PC-3 (cell line): ENCODE measurements at regions of chr2 and their contacts with region 1.

Region 1: GRCh38 chr2:56009758-56010458 is 86.3 kb upstream of the EFEMP1 start:
- DNase-seq: peak; percentile 72
- ATAC-seq: no peak
- H3K4me3 ChIP-seq: no peak overlapping the region
- H3K27ac ChIP-seq: no peak overlapping the region
- H3K4me1 ChIP-seq: peaks cover 10% of the 10 kb centered on the region; the same call in 1 of the 2 replicates
- H3K27me3 ChIP-seq: no peaks in the 10 kb centered on the region
- CTCF ChIP-seq: peak; percentile 73

Region 2: GRCh38 chr2:55707751-55708150 is 302.2 kb before region 1 on chr2:
- CTCF ChIA-PET with region 1: no interaction called
- POLR2A ChIA-PET with region 1: no interaction called
- intact Hi-C with region 1: no loop called
- DNase-seq: no peak
- ATAC-seq: no peak
- H3K4me3 ChIP-seq: no peak overlapping the region
- H3K27ac ChIP-seq: no peak overlapping the region
- H3K4me1 ChIP-seq: no peaks in the 10 kb centered on the region
- H3K27me3 ChIP-seq: no peaks in the 10 kb centered on the region
- CTCF ChIP-seq: no peak

Region 3: DNA sequence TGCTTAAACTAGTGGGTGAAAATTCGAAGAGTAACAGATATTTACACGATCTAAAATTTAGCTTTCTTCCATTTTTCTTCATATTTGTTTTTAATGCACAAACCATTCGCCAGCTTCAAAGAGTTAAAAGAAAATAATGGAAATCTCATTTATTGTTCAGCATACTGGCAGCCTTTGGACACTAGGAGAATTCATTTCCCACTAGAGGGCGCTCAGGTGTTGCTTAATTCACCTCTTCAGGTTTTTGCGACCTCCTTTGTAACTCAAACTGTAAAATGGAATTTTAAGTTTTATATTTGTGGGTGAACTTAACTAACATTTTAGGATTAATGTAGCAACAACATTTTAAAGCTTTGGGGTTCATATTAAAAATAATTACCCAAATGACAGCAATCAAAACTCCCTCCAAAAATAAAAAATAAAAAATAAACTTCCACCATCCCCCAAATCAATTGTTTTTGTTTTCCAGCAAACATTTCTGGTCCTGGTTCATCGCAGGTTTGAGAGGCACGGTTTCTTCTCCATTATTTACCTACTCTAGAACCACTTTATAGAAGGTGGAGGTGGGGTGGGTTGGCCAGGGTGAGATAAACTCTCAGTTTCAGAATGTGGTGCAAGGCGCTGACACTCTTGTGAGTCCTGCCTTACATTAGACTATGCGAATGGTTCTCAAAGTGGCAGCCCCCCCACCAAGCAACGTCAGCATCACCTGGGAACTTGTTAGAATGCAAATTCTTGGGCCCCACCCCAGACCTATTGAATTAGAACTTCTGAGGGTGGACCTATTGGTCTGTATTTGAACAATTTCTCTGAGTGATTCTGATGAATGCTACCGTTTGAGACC is 291.5 kb before region 1 on chr2:
- CTCF ChIA-PET with region 1: no interaction called
- POLR2A ChIA-PET with region 1: no interaction called
- intact Hi-C with region 1: loop called (anchors 1 kb)
- DNase-seq: peak; percentile 86
- ATAC-seq: peak; percentile 74
- H3K4me3 ChIP-seq: no peak overlapping the region
- H3K27ac ChIP-seq: no peak overlapping the region
- H3K4me1 ChIP-seq: peaks cover 22% of the 10 kb centered on the region
- H3K27me3 ChIP-seq: no peaks in the 10 kb centered on the region
- CTCF ChIP-seq: peak; percentile 93

Region 4: GRCh38 chr2:55776966-55777365 is 232.9 kb before region 1 on chr2:
- CTCF ChIA-PET with region 1: no interaction called
- POLR2A ChIA-PET with region 1: no interaction called
- intact Hi-C with region 1: no loop called
- DNase-seq: no peak
- ATAC-seq: no peak
- H3K4me3 ChIP-seq: no peak overlapping the region
- H3K27ac ChIP-seq: no peak overlapping the region
- H3K4me1 ChIP-seq: peaks cover 35% of the 10 kb centered on the region
- H3K27me3 ChIP-seq: no peaks in the 10 kb centered on the region
- CTCF ChIP-seq: no peak

Region 5: GRCh38 chr2:55970500-55970899 is 39.4 kb before region 1 on chr2:
- CTCF ChIA-PET with region 1: no interaction called
- POLR2A ChIA-PET with region 1: no interaction called
- intact Hi-C with region 1: no loop called
- DNase-seq: no peak
- ATAC-seq: no peak
- H3K4me3 ChIP-seq: no peak overlapping the region
- H3K27ac ChIP-seq: no peak overlapping the region
- H3K4me1 ChIP-seq: no peaks in the 10 kb centered on the region
- H3K27me3 ChIP-seq: no peaks in the 10 kb centered on the region
- CTCF ChIP-seq: no peak